Cardiac septum (tissue), 1 donor: ENCODE measurements at regions of chr6 and their contacts with region 1.

Region 1: DNA sequence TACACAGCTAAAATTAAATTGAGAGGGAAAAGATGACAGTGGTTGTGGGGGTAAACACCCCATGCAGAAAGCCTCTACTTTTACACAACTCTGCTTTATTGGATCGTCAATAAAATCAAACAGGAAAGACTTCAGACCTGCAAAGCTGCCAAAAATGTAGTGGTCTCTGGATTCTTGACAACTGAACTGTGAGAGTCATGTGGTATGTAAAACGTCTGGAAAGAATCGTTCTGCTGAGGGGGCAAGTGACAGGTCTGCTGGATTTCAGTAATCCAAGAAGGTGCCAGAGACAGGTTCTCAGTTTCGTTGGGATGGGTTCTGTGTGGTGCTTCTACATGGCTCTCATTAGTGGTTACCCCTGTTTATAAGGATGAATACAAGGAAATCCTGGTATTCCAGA is 63.3 kb downstream of the TSPYL4 start:
- DNase-seq: no peak

Region 2: DNA sequence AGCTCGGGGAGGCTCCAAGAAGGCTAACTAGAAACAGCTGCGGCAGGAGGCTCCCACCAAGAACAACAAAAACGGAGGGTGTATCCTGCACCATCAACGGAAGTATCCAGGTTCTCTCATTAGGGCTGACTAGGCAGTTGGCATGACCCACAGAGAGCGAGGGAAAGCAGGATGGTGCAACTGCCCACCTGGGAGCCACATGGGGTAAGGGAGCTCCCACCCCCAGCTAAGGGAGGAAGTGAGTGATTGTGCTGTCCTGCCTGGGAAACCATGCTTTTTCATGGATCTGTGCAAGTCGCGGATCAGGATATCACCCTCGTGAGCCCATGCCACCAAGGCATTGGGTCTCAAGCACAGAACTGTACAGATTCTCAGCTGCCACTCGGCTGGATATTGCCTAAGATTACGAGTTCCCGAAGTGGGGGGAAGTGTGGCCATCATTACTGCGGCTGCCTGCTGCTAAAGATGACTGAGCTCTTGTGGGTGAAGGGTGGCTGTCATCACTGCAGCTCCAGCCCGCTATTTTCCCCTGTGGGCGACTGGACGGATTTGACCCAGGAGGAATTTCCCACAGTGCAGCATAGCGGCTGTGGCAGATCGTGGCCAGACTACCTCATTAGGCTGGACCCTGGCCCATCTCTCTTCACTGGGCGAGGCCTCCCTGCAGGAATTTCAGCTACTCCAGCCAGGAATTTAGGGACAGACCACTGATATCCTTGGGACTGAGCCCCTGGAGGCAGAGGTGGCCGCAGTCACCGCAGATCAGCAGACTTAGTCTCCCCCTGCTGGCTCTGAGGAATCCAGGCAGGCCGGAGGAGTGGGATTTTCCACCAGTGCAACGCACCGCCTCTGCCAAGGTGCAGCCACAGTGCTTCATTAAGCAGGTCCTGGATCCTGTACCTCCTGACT is 645.5 kb before region 1 on chr6:
- intact Hi-C with region 1: no loop called
- DNase-seq: peak; percentile 61

Region 3: GRCh38 chr6:116100419-116101301 is 89.9 kb before region 1 on chr6 and contains the start of gene NT5DC1:
- intact Hi-C with region 1: no loop called
- DNase-seq: peak; percentile 92
- total RNA-seq, gene NT5DC1: 38.8 TPM

Region 4: DNA sequence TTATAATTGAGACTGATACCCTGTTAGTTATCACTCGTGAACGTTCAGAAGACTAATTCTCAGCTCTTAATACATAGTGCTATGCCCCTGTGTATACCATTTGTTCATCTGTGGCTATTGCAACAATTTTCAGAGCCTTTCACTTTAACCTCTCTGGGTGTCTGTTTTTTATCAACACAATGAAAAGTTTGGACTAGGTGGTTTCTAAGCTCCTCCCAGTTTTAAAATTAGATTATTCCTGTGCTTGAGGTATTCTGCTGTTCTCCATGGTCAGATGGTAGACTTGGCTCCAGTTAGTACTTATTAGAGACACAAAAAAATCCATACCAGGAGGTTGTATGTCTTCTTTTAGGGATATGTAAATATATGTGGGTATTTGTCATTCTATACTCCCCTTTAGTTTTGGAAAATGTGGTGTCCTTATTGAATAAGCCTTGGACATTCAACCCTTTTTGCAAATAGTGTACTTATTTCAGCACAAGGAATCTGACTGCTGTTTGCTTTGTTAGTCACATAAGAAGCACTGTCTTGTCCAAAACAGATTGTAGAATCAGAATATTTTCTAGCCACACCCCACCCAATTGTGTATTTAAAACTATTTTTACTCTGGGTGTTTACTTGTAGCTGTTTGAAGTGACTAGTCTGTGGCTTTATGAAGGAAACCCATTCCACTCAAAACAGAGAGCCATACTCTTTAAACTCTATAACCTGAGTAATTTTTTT is 62.6 kb before region 1 on chr6:
- intact Hi-C with region 1: loop called (anchors 10 kb)
- DNase-seq: no peak

Region 5: DNA sequence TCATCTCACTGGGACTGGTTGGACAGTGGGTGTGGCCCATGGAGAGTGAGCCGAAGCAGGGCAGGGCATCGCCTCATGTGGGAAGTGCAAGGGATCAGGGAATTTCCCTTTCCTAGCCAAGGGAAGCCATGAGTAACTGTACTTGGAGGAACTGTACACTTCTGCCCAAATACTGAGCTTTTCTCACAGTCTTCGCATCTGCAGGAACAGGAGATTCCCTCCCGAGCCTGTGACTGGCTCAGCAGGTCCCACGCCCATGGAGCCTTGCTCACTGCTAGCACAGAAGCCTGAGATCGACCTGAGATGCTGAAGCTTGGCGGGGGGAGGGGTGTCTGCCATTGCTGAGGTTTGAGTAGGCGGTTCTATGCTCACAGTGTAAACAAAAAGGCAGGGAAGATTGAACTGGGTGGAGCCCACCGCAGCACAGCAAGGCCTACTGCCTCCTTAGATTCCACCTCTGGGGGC is 310.5 kb after region 1 on chr6:
- intact Hi-C with region 1: no loop called
- DNase-seq: no peak